ENCODE measurements at regions of chr4 and their contacts with region 1.

Region 1: DNA sequence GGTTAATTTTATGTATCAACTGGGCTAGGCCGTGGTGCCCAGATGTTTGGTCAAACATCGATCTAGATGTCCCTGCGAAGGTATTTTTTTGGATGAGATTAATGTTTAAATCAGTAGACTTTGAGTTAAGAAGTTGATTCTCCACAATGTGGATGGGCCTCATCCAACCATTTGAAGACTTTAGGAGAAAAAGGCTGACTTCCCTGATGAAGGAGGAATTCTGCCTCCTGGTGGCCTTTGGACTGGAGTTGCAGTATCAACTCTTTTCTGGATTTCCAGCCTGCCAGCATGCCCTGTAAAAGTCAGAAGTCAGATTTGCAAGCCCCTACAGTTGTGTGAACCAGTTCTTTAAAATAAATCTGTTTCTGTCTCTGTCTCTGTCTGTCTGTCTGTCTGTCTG is 91.4 kb downstream of the STK32B start:
- DNase-seq: peak; percentile 39
- H3K4me3 ChIP-seq: no peak overlapping the region
- H3K27ac ChIP-seq: no peak overlapping the region
- H3K4me1 ChIP-seq: peaks cover 0 to 2% (median 0%) of the 10 kb centered on the region in 4 donors
- H3K27me3 ChIP-seq: no peaks in the 10 kb centered on the region
- CTCF ChIP-seq: peak; percentile 34 to 56 (median 34)
- EP300 ChIP-seq: no peak
- POLR2A ChIP-seq: no peak

Region 2: GRCh38 chr4:4995103-4995907 is 147.4 kb before region 1 on chr4:
- intact Hi-C with region 1: loop called (anchors 5 kb)
- DNase-seq: peak; percentile 92
- H3K4me3 ChIP-seq: no peak overlapping the region
- H3K27ac ChIP-seq: no peak overlapping the region
- H3K4me1 ChIP-seq: peaks cover 17 to 40% (median 35%) of the 10 kb centered on the region in 4 donors
- H3K27me3 ChIP-seq: no peaks in the 10 kb centered on the region
- CTCF ChIP-seq: peak; percentile 83 to 98 (median 85)
- EP300 ChIP-seq: no peak
- POLR2A ChIP-seq: no peak

Region 3: DNA sequence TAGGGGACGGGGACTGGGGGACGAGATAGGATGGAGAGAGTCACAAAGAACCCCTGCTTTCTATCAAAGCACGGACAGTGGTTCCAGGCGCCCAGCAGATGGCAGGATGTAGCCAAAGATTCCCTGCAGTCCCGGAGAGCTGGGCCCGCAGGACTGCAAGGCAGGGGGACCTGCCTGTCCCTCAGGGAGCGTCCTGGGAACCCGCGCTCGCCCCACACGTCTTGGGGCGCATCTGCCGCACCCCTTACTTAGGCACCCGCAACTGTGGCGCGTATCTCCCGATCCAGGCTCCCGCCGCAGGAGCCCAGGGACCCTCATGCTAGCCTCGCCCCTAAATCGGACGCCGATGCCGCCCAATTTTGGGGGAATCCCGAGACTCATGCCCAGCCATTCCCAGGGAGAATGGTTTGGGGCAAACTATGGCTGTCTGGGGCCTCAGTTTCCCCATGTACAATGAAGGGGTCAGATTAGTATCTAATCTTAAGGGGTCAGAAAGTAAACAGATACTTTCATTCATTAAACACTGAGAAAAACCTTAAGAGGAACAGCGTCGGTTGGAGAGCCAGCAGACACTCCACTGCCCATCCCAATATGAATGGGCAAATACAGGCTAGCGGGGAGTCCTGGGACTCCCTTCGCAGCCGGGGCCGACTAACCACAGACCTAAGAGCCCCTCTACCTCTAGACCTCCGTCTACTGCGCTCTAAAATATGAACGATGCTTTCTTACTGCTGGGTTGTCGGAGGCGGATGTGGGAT is 92.0 kb before region 1 on chr4:
- intact Hi-C with region 1: loop called (anchors 5 kb)
- DNase-seq: peak; percentile 93
- H3K4me3 ChIP-seq: peak overlapping the region; percentile 62 to 67 (median 65)
- H3K27ac ChIP-seq: peak overlapping the region; percentile 14 to 56 (median 38)
- H3K4me1 ChIP-seq: peaks cover 14 to 26% (median 20%) of the 10 kb centered on the region in 4 donors
- H3K27me3 ChIP-seq: peaks cover 0 to 5% (median 0%) of the 10 kb centered on the region in 4 donors
- CTCF ChIP-seq: peak; percentile 63 to 79 (median 69)
- EP300 ChIP-seq: no peak
- POLR2A ChIP-seq: no peak

Region 4: GRCh38 chr4:5734853-5735252 is 592.1 kb after region 1 on chr4:
- intact Hi-C with region 1: no loop called
- DNase-seq: no peak
- H3K4me3 ChIP-seq: no peak overlapping the region
- H3K27ac ChIP-seq: no peak overlapping the region
- H3K4me1 ChIP-seq: no peaks in the 10 kb centered on the region
- H3K27me3 ChIP-seq: no peaks in the 10 kb centered on the region
- CTCF ChIP-seq: no peak
- EP300 ChIP-seq: no peak
- POLR2A ChIP-seq: no peak